Endothelial cell of umbilical vein (primary cell): ENCODE measurements at regions of chr9 and their contacts with region 1.

Region 1: DNA sequence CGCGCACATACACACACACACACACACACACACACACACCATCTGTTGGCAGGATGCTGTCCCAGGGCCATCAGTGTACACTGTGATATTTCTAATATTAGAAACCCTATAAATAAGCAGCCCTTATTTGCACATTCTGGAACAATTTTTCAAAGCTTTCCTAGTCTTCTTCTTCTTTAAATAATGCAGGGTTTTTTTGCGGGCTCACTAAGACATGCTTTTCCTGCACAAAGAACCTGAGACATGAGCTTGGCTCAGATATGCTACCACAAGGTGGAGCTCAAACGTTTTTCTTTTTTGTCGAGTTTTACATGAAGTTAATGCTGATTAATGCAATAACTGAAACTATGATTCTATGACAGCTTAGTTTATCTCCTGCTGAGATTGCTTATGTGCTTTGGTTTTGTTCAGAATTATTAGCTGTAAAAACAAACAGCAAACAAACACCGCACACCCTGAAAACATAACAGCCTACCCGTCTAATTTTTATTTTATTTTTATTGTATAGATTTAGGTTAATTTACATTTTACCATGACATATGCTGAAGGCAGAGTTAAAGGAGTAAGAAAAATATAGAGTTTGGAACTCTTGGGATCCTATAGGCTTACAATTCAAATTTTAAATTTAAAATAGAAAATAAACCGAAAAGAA is 95.8 kb downstream of the ALDH1A1 start:
- DNase-seq: peak; percentile 74
- H3K4me3 ChIP-seq: no peak overlapping the region
- H3K27ac ChIP-seq: peak overlapping the region; percentile 35
- H3K4me1 ChIP-seq: peaks cover 16% of the 10 kb centered on the region
- H3K27me3 ChIP-seq: no peaks in the 10 kb centered on the region
- CTCF ChIP-seq: peak; percentile 60 to 63
- POLR2A ChIP-seq: no peak

Region 2: DNA sequence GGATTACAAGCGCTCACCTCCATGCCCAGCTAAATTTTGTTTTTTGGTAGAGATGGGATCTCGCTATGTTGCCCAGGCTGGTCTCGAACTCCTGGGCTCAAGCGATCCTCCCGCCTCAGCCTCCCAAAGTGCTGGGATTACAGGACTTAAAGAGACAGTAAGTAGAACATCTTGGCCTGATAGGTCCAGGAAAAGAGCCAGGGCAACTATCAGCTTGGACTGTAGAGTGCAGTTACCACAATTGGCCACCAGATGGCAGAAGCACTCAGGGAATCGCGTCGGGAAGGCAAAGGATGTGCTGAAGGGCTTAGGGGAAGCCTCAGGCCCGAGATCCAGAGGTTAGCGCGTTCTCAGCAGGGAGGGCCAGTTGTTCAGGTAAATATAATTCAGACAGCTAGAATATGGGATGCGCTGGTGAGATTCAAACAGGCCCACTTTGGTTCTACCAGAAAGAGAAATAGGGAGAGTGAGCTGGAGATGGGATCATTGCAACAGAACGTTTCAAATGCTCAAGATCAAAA is 818.1 kb before region 1 on chr9:
- CTCF ChIA-PET with region 1: interaction called, 13 read pairs
- POLR2A ChIA-PET with region 1: no interaction called
- dilution Hi-C with region 1: no loop called
- intact Hi-C with region 1: no loop called
- DNase-seq: peak; percentile 74
- H3K4me3 ChIP-seq: no peak overlapping the region
- H3K27ac ChIP-seq: no peak overlapping the region
- H3K4me1 ChIP-seq: no peaks in the 10 kb centered on the region
- H3K27me3 ChIP-seq: no peaks in the 10 kb centered on the region
- CTCF ChIP-seq: peak; percentile 85 to 91
- POLR2A ChIP-seq: no peak

Region 3: DNA sequence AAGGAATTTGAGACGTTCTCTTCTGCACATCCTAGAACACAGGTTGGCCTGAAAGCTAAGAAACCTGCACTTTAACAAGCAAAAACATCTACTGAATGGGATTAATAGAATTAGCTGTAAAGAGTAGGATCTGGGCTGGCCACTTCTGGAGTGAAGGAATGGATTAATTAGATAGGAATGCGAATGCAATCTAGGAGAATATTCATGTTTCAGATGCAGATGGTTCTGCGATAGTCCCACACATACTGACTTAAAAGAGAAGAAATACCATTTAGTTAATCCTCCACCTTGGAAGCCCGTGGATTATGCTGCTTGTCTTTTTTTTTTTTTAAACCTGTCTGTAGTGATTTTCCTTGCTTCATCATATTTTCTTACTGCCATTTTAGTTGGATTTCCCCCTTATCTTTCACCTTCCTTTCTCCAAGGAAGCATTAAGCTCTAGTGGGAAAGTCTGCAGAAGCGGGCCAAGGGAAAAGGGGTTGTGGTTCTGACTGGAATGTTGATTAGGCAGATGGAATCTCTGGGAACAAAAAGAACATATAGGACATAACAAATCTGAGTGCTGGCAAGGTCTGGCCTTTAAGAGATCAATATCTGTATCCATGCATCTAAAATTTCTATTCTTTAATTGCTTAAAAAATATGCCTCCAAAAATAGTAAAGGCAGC is 56.6 kb before region 1 on chr9:
- CTCF ChIA-PET with region 1: no interaction called
- POLR2A ChIA-PET with region 1: no interaction called
- dilution Hi-C with region 1: no loop called
- intact Hi-C with region 1: no loop called
- DNase-seq: no peak
- H3K4me3 ChIP-seq: no peak overlapping the region
- H3K27ac ChIP-seq: no peak overlapping the region
- H3K4me1 ChIP-seq: no peaks in the 10 kb centered on the region
- H3K27me3 ChIP-seq: no peaks in the 10 kb centered on the region
- CTCF ChIP-seq: no peak
- POLR2A ChIP-seq: no peak

Region 4: DNA sequence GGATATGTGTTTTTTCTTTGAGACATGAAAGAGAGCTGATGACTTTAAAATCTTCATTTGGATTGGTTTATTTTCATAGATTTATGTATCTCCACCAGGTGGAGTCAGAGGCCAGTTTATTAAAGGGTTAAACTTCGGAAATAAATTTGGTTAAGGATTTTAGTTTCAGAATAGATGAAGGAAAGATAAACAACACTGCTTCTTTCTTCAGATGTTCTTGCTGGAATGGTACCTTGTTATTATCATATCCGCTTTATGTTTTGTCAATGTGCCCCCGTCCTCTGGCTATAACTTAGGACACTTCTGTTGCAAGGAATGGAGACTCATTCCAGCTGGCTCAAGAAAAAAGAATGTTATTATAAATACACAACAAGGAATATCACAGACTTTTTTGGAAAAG is 14.6 kb after region 1 on chr9:
- CTCF ChIA-PET with region 1: interaction called, 77 read pairs
- POLR2A ChIA-PET with region 1: no interaction called
- dilution Hi-C with region 1: no loop called
- intact Hi-C with region 1: no loop called
- DNase-seq: peak; percentile 62
- H3K4me3 ChIP-seq: no peak overlapping the region
- H3K27ac ChIP-seq: peak overlapping the region; percentile 50
- H3K4me1 ChIP-seq: peaks cover 5% of the 10 kb centered on the region
- H3K27me3 ChIP-seq: no peaks in the 10 kb centered on the region
- CTCF ChIP-seq: peak; percentile 20 to 29
- POLR2A ChIP-seq: no peak

Region 5: DNA sequence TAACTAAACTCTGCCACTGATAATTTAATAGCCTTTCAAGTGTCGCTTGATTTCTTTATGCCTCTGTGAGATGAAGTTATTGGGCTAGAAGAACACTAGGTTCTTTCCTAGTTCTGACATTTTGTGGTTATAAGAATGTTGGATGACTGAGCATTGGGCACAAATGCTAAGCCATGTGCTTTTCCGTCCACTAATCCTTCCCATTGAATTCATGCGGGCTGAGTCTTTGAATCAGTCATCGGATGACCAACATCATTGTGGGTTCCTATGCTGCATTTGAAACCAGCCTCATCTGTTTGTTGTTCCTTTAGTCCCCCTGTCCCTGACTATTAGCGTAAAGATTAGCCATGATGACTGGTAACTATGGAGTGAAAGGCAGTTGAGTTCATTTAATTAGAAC is 37.2 kb after region 1 on chr9:
- CTCF ChIA-PET with region 1: no interaction called
- POLR2A ChIA-PET with region 1: no interaction called
- dilution Hi-C with region 1: no loop called
- intact Hi-C with region 1: no loop called
- DNase-seq: no peak
- H3K4me3 ChIP-seq: no peak overlapping the region
- H3K27ac ChIP-seq: no peak overlapping the region
- H3K4me1 ChIP-seq: no peaks in the 10 kb centered on the region
- H3K27me3 ChIP-seq: no peaks in the 10 kb centered on the region
- CTCF ChIP-seq: no peak
- POLR2A ChIP-seq: no peak

Region 6: GRCh38 chr9:73081979-73082657 is 225.0 kb after region 1 on chr9:
- CTCF ChIA-PET with region 1: interaction called, 135 read pairs
- POLR2A ChIA-PET with region 1: no interaction called
- dilution Hi-C with region 1: loop called (anchors 25 kb)
- intact Hi-C with region 1: loop called (anchors 1 kb)
- DNase-seq: peak; percentile 90
- H3K4me3 ChIP-seq: no peak overlapping the region
- H3K27ac ChIP-seq: no peak overlapping the region
- H3K4me1 ChIP-seq: peaks cover 2% of the 10 kb centered on the region
- H3K27me3 ChIP-seq: no peaks in the 10 kb centered on the region
- CTCF ChIP-seq: peak; percentile 61 to 74
- POLR2A ChIP-seq: no peak

Region 7: DNA sequence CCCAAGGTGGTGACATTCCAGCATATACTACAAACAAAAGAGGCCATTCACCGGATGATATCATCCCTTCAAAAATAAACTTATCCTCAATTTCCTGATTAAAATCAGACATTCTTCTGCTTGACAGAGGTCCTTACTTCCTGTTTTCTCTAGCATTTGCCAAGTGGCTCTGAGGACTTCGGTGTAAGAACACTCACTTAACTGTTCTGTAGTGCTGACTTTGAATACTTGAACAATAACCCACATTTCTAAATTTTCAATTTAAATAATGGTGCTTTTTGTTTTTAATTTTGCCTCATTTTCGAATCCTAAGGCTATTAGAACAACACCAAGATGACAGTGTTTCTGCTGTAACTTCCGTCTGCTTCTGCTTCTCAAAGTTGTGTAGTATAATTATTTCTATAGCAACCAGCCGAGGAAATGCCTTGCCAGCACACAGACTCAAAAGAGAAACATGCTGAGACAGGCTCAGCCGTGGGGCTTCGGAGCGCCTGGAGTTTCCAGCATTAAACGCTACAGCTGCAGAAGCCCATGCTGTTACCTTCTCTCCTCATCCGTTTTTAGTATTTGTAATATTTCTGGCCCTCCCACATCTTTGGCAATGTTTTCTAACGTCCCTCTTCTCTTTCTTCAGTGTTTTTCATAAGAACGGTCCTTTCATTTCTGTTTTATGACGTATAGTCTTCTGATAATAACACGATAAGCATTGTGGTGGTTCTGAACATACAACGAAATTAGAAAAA is 275.1 kb after region 1 on chr9:
- CTCF ChIA-PET with region 1: interaction called, 10 read pairs
- POLR2A ChIA-PET with region 1: no interaction called
- dilution Hi-C with region 1: no loop called
- intact Hi-C with region 1: no loop called
- DNase-seq: peak; percentile 94
- H3K4me3 ChIP-seq: peak overlapping the region; percentile 29 to 92 (median 84)
- H3K27ac ChIP-seq: peak overlapping the region; percentile 95
- H3K4me1 ChIP-seq: peaks cover 27% of the 10 kb centered on the region
- H3K27me3 ChIP-seq: no peaks in the 10 kb centered on the region
- CTCF ChIP-seq: no peak
- POLR2A ChIP-seq: peak; percentile 41

Region 8: GRCh38 chr9:73200694-73201452 is 343.8 kb after region 1 on chr9:
- CTCF ChIA-PET with region 1: interaction called, 21 read pairs
- POLR2A ChIA-PET with region 1: no interaction called
- dilution Hi-C with region 1: no loop called
- intact Hi-C with region 1: no loop called
- DNase-seq: peak; percentile 39
- H3K4me3 ChIP-seq: no peak overlapping the region
- H3K27ac ChIP-seq: no peak overlapping the region
- H3K4me1 ChIP-seq: no peaks in the 10 kb centered on the region
- H3K27me3 ChIP-seq: peaks cover 4 to 10% of the 10 kb centered on the region in 2 experiments
- CTCF ChIP-seq: peak; percentile 37 to 40
- POLR2A ChIP-seq: no peak